ENCODE measurements at regions of chr16 and their contacts with region 1.

Region 1: DNA sequence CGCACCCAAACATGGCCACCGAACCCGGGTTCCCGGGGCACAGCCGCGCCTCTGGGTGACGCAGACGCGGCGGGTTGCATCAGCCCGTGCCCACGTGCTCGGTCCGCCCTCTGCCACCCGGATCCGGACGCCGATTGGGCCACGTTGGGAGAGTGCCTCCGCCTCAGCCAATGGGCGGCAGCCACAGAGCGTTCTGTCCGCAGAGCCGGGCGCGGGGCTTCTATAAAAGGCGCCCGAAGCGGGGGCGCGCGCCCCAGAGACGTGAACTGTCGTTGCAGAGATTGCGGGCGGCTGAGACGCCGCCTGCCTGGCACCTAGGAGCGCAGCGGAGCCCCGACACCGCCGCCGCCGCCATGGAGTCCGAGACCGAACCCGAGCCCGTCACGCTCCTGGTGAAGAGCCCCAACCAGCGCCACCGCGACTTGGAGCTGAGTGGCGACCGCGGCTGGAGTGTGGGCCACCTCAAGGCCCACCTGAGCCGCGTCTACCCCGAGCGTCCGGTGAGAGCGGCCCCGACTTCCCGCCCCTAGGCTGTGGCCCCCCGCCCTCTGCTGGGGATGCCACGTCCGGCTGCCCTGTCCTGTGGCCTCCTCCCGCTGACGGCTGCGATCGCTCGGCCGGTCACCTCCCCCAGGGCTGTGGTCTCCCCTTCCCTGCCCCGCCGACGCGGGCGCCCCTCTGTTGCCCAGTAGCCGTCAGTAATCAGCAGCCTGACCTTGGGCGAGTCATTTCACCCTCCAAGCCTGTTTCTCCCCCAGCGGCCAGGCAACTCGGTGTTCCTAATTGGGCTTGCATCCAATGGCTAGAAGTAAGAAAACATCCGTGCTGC is at the start of gene HERPUD1:
- DNase-seq: peak; percentile 92 to 99
- H3K4me3 ChIP-seq: peak within 1 kb of the TSS; percentile 99 to 100
- H3K27ac ChIP-seq: peak within 1 kb of the TSS; percentile 99 to 100
- H3K4me1 ChIP-seq: peaks cover 12 to 17% of the 10 kb centered on the region in 2 donors
- H3K27me3 ChIP-seq: no peaks in the 10 kb centered on the region
- CTCF ChIP-seq: peak in 2 of 3 experiments; percentile 5 to 14
- total RNA-seq, gene HERPUD1: 108 TPM

Region 2: DNA sequence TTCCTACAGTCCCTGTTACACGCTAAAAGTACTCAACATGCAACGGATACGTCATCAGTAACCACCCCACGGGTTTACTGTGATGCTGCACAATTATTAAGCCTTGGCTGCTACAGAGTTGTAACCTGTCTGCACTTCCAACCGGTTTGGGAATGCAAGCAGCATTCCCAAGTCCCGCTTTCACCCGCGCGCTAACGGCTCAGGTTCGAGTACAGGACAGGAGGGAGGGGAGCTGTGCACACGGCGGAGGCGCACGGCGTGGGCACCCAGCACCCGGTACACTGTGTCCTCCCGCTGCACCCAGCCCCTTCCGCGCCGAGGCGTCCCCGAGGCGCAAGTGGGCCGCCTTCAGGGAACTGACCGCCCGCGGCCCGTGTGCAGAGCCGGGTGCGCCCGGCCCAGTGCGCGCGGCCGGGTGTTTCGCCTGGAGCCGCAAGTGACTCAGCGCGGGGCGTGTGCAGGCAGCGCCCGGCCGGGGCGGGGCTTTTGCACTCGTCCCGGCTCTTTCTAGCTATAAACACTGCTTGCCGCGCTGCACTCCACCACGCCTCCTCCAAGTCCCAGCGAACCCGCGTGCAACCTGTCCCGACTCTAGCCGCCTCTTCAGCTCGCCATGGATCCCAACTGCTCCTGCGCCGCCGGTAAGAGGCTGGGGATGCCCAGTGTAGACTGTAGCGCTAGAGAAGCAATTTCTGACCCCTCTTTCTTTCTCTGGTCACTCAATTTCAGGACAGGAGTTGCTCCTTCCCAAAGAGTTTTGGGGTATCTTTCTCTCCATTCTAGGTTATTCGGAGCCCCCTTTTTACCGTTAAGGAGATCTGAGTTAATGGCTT is 323.8 kb before region 1 on chr16 and contains the start of gene MT2A:
- intact Hi-C with region 1: loop called (anchors 5 kb)
- DNase-seq: peak; percentile 92 to 98
- H3K4me3 ChIP-seq: peak within 1 kb of the TSS; percentile 51 to 70
- H3K27ac ChIP-seq: peak within 1 kb of the TSS; percentile 87 to 92
- H3K4me1 ChIP-seq: peaks cover 11 to 35% of the 10 kb centered on the region in 2 donors
- H3K27me3 ChIP-seq: no peaks in the 10 kb centered on the region
- CTCF ChIP-seq: no peak
- total RNA-seq, gene MT2A: 602 TPM

Region 3: GRCh38 chr16:56916571-56917403 is 15.3 kb before region 1 on chr16:
- intact Hi-C with region 1: no loop called
- DNase-seq: no peak
- H3K4me3 ChIP-seq: no peak overlapping the region
- H3K27ac ChIP-seq: peak overlapping the region; percentile 24 to 50
- H3K4me1 ChIP-seq: peaks cover 0 to 13% of the 10 kb centered on the region in 2 donors
- H3K27me3 ChIP-seq: no peaks in the 10 kb centered on the region
- CTCF ChIP-seq: no peak

Region 4: DNA sequence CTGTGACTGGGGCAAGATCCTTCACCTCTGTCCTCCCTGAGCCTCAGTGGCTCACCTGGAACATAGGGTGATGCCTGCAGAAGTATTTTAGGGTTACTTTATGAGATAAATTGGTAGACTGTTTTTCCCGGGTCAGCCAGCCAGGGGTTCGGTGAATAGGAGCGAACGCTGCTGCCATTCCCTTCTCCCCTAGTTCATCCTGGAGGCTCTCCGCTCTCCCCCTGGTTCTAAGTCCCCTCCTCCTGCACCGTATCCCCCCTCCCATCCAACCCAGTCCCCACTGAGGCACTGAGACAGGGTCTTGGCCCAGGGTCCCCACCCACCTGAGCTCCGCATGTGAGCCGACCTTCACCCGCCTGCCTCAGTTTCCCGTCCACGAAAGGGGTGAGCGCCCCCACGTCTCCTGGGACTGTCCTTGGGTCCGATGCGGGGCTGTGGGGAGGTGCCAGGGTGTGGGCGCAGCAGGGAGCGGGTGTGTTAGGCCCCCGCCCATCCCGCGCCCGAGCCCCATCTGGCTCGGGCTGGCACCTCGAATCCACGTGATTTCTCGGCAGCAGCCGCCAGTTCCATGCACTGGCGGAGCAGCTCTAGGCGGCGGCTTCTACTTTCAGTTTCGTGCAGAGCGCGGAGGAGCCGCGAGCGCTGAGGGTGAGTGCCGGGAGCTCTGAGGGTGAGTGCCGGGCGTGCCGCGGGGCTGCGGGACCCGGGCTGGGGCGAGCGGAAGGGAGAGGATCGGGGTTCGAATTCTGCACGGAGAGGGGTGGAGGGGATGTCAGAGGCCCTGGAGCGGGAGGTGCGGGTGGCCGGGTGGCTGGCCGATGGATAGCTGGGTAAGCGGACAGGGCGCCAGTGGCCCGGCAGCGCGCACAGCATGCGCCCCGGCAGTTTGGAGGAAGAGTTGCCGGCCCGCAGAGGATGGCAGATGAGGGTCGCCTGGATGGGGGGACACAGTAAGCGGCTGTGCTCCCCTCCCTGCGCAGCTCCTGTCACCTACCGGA is 57.1 kb after region 1 on chr16 and contains the start of gene NLRC5:
- intact Hi-C with region 1: loop called (anchors 2 kb)
- DNase-seq: peak; percentile 72 to 92
- H3K4me3 ChIP-seq: peak within 1 kb of the TSS; percentile 69 to 95
- H3K27ac ChIP-seq: peak within 1 kb of the TSS; percentile 81 to 87
- H3K4me1 ChIP-seq: peaks cover 0 to 16% of the 10 kb centered on the region in 2 donors
- H3K27me3 ChIP-seq: no peaks in the 10 kb centered on the region
- CTCF ChIP-seq: no peak
- total RNA-seq, gene NLRC5: 46.7 TPM

Region 5: GRCh38 chr16:57535680-57536305 is 603.7 kb after region 1 on chr16:
- intact Hi-C with region 1: loop called (anchors 5 kb)
- DNase-seq: peak; percentile 74 to 97
- H3K4me3 ChIP-seq: peak overlapping the region; percentile 92 to 93
- H3K27ac ChIP-seq: peak overlapping the region; percentile 89 to 90
- H3K4me1 ChIP-seq: peaks cover 19 to 24% of the 10 kb centered on the region in 2 donors
- H3K27me3 ChIP-seq: no peaks in the 10 kb centered on the region
- CTCF ChIP-seq: peak in 2 of 3 experiments; percentile 21 to 27